Activated CD8-positive, alpha-beta memory T cell treated with anti-CD3 and anti-CD28 coated beads, Interleukin-2, amount 10 ng/mL, durations not matched to agents 7 days and 5 days (primary cell): ENCODE measurements at regions of chr14 and their contacts with region 1.

Region 1: GRCh38 chr14:89973234-89973823 is 17.6 kb downstream of the TDP1 start:
- DNase-seq: peak; percentile 69
- ATAC-seq: peak; percentile 65
- H3K4me3 Mint-ChIP-seq: no peak overlapping the region
- H3K27ac Mint-ChIP-seq: no peak overlapping the region
- H3K4me1 Mint-ChIP-seq: no peaks in the 10 kb centered on the region
- H3K27me3 Mint-ChIP-seq: no peaks in the 10 kb centered on the region

Region 2: DNA sequence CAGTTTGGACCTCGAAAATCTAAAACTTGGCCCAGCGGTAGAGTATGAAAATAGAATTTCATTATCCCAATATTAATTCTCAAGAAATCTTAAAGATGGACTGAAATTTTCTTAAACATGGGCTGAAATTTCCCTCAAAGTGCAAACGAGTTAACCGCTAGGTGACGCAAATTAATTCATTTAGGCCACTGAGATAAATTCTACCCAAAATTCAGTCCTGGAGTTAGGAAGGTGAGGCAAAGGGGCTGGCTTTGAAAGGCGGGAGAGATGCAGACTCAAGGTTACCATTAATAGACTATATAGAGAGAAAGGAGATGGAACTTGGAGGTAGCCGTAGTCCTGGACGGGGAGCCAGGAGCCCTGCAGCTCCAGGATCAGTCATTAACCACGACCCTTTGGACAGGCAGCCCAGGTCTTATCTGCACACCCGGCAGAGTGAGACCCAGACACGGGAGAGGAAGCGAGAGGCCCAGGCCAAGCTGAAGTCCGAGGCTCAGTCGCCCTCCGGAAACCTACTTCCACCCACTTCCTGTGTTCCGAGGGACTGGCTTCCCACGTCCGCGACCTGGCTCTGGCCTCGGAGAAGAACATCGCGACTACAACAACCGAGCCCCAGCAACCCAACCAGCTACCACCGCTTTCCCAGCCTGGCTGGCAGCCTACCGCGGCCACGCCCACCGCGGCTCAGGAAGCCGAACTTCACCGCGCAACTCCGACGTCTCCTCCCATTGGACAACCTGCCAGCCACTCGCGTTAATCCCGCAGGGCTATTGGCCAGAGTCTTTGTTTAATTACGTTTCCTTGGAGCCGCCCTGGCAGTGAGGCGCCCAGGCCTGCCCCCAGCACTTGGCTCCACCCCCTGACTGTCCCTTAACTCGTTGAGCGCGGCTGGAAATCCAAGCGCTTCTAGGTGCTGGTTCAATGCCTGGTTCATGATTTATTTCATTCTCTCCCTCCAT is 19.0 kb before region 1 on chr14 and contains the start of gene EFCAB11:
- CTCF ChIA-PET with region 1: interaction called, 81 read pairs
- DNase-seq: peak; percentile 98
- ATAC-seq: peak; percentile 85
- H3K4me3 Mint-ChIP-seq: peak within 1 kb of the TSS; percentile 93
- H3K27ac Mint-ChIP-seq: peak within 1 kb of the TSS; percentile 90
- H3K4me1 Mint-ChIP-seq: peaks cover 43% of the 10 kb centered on the region
- H3K27me3 Mint-ChIP-seq: no peaks in the 10 kb centered on the region
- total RNA-seq, gene EFCAB11: 11.3 to 12.4 TPM

Region 3: DNA sequence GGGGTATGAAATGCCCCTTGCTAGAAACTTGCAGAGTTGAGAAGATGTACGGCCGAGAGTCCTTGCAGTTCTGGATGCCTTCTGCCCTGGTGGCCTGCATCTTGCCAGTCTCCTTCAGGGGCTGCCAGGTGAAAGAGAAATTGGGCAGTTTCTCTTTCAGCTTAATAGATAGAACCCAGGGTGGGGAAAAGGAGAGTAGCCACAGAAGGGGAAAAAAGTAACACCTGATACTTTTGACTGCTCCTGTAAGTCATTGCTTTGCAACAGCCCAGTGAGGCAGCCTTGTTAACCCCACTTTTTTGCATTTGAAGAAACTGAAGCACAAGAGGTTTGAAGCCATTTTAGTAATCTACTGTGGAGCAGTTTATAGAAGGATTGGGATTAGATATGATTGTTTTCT is 10.0 kb after region 1 on chr14:
- CTCF ChIA-PET with region 1: interaction called, 23 read pairs
- DNase-seq: no peak
- ATAC-seq: no peak
- H3K4me3 Mint-ChIP-seq: no peak overlapping the region
- H3K27ac Mint-ChIP-seq: peak overlapping the region; percentile 8
- H3K4me1 Mint-ChIP-seq: no peaks in the 10 kb centered on the region
- H3K27me3 Mint-ChIP-seq: no peaks in the 10 kb centered on the region

Region 4: GRCh38 chr14:90003507-90003906 is 30.2 kb after region 1 on chr14:
- CTCF ChIA-PET with region 1: interaction called, 11 read pairs
- DNase-seq: no peak
- ATAC-seq: no peak
- H3K4me3 Mint-ChIP-seq: no peak overlapping the region
- H3K27ac Mint-ChIP-seq: no peak overlapping the region
- H3K4me1 Mint-ChIP-seq: peaks cover 18% of the 10 kb centered on the region
- H3K27me3 Mint-ChIP-seq: no peaks in the 10 kb centered on the region

Region 5: DNA sequence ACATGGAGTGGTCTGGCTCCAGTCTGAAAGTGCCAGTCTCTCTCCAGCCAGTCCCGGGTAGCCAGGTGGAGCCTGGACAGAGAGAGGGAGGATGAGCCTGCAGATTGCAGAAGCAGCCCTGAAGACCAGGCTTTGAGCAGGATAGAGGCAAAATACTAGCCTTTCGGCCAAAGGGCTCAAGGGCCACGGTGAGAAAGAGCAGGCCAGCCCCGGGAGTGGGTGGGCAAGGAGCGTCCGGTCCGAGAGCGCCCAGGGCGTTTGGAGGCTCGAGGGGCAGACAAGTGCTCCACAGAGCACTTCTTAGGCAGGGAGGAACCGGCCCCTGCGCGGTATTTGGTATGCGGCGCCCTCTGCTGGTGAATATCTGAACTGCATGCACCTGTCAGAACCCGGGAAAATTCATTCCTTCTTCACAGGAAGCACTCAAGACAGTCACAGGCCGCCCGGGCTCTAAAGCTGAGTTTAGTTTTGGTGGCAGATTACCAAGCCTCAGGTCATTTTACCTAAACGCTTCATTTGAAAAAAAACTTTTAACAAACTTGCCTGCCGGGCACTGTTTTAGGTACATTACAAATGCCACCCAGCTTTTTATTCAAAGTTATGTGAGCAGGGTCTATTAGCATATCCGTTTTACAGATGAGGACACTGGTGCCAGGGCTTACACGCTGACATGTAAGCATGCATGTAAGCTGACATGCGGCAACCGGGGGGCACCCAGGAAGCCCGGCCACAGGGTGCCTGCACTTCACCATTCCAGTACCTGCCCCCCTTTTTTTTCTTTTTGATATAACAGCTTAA is 262.0 kb after region 1 on chr14:
- CTCF ChIA-PET with region 1: interaction called, 22 read pairs
- DNase-seq: peak; percentile 75
- ATAC-seq: peak; percentile 69
- H3K4me3 Mint-ChIP-seq: no peak overlapping the region
- H3K27ac Mint-ChIP-seq: no peak overlapping the region
- H3K4me1 Mint-ChIP-seq: peaks cover 2% of the 10 kb centered on the region
- H3K27me3 Mint-ChIP-seq: peaks cover 8% of the 10 kb centered on the region